ENCODE measurements at regions of chr4 and their contacts with region 1.

Region 1: GRCh38 chr4:121484633-121485032 is 103.8 kb upstream of the QRFPR start:
- DNase-seq: no peak
- ATAC-seq: peak in 1 of 2 donors; percentile 36
- H3K4me3 ChIP-seq: no peak overlapping the region
- H3K27ac ChIP-seq: no peak overlapping the region
- H3K4me1 ChIP-seq: no peaks in the 10 kb centered on the region
- H3K27me3 ChIP-seq: no peaks in the 10 kb centered on the region
- CTCF ChIP-seq: peak in 3 of 5 experiments; percentile 34 to 47 (median 36)
- POLR2A ChIP-seq: no peak

Region 2: DNA sequence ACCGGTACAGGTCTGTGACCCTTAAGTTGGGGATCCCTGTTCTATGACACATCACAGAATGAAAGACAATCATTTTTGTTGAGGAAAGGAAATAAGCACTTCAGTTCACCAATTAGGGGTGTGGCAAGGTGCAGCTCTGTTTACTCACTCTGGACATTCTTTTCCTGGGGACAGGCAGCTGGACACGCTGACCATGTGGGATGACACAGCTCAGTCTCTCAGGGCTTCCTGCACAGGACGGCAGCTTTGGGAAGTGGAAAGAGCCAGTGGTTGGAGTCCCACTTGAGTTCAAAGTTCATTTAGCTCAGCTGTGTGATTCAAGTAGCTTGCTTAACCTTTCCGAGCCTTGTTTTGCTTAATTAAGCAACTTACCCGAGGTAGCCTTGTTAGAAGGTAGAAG is 468.0 kb before region 1 on chr4:
- in situ Hi-C with region 1: no loop called
- intact Hi-C with region 1: no loop called
- DNase-seq: no peak
- ATAC-seq: no peak
- H3K4me3 ChIP-seq: no peak overlapping the region
- H3K27ac ChIP-seq: no peak overlapping the region
- H3K4me1 ChIP-seq: no peaks in the 10 kb centered on the region
- H3K27me3 ChIP-seq: no peaks in the 10 kb centered on the region
- CTCF ChIP-seq: no peak
- POLR2A ChIP-seq: no peak

Region 3: DNA sequence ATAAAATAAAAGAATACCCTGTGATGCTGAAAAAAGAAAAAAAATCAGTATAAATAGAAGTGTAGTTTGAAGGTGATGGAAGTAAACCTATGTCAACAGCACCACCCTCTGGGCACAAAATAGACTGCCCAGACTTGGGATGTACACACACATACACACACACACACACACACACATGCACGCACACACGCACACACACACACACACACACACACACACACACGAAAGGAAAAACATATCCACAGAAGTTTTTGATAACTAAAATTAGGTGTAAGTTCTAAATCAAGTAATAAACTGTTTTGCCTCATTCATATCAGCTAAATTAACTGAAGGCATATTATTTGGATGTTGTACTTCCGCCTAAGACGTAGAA is 171.6 kb after region 1 on chr4:
- in situ Hi-C with region 1: no loop called
- intact Hi-C with region 1: loop called (anchors 10 kb)
- DNase-seq: no peak
- ATAC-seq: no peak
- H3K4me3 ChIP-seq: no peak overlapping the region
- H3K27ac ChIP-seq: no peak overlapping the region
- H3K4me1 ChIP-seq: no peaks in the 10 kb centered on the region
- H3K27me3 ChIP-seq: no peaks in the 10 kb centered on the region
- CTCF ChIP-seq: peak in 1 of 5 experiments; percentile 29
- POLR2A ChIP-seq: no peak